ENCODE measurements at regions of chr18 and their contacts with region 1.

Region 1: GRCh38 chr18:74702950-74703349 is 105.3 kb downstream of the ZNF407 start:
- DNase-seq: no peak
- CTCF ChIP-seq: no peak

Region 2: DNA sequence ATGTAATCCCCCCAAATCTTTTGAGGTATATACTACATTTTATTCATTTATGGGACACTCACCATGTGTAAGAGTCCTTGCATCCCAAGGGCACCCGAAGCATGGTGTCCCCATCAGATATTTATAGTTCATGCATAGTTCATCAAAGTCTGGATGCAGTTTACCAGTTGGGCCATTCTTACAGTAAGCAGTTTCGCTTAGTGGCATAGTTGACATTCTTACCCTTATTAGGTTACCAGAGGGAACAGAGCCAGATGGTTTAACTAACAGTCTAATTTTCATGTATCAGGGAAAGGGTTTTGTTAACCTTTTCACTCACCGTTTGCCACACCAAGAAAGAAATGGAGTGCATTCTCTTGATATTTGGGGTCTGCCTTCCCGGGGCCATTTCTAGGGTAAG is 98.2 kb before region 1 on chr18:
- CTCF ChIA-PET with region 1: no interaction called
- POLR2A ChIA-PET with region 1: no interaction called
- DNase-seq: no peak
- CTCF ChIP-seq: no peak

Region 3: DNA sequence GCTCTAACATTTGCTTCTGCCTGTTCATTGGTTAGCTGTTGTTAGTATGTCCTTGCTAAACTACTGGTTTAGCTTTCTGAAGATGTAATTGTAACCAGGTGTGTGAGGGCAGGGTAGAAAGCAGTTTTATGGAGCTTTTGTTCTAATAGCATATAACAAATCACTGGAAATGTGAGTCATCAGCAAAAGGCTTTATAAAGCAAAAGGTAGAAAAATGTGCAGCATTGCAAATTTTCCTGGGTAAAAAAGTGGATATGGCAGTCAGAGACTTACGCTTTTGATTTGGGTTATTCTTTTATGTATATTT is 20.0 kb before region 1 on chr18:
- CTCF ChIA-PET with region 1: interaction called, 10 read pairs
- POLR2A ChIA-PET with region 1: no interaction called
- DNase-seq: no peak
- CTCF ChIP-seq: no peak

Region 4: GRCh38 chr18:74951165-74951760 is 248.3 kb after region 1 on chr18:
- CTCF ChIA-PET with region 1: no interaction called
- POLR2A ChIA-PET with region 1: no interaction called
- DNase-seq: peak; percentile 26
- CTCF ChIP-seq: no peak